ENCODE measurements at regions of chr2 and their contacts with region 1.

Region 1: DNA sequence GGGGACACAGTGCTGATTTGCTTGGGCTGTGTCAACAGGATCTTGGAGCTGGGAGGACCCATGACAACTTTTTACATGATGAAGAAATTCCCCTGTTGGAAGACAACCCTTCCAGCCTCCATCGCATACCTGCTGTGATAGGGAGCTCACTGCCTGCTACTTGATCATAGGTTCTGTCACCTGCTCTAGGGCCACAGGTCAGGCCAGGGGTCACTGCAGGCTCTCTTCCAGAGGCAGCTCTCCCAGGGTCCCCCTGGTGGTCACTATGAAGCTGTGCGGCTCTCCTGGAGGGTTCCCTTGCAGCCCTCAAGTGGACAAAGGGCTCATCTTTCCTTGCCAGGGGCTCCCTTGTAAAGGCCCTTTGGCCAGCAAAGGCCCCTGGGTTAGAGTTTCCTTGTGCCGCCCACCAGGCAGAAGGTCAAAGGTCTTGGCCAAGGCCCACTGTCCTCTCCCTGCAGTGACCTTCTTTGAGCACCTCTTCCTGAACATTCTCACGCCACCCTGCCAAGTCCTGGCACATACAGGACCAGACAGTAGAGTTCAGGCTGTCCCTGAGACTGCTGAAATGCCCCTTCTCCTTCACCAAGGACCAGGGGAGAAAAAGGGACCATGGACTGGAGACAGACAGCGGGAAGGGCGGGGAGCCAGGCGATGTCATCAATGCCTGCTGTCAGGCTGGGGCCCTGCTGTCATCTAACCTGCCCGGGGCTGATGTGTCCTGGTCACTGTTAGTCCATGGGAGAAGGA is 345.1 kb downstream of the DYSF start:
- DNase-seq: peak in 1 of 2 donors; percentile 63
- H3K4me3 ChIP-seq: no peak overlapping the region
- H3K27ac ChIP-seq: no peak overlapping the region
- H3K4me1 ChIP-seq: peaks cover 7 to 13% of the 10 kb centered on the region in 2 donors
- H3K27me3 ChIP-seq: no peaks in the 10 kb centered on the region
- CTCF ChIP-seq: peak; percentile 69 to 78 (median 72)

Region 2: DNA sequence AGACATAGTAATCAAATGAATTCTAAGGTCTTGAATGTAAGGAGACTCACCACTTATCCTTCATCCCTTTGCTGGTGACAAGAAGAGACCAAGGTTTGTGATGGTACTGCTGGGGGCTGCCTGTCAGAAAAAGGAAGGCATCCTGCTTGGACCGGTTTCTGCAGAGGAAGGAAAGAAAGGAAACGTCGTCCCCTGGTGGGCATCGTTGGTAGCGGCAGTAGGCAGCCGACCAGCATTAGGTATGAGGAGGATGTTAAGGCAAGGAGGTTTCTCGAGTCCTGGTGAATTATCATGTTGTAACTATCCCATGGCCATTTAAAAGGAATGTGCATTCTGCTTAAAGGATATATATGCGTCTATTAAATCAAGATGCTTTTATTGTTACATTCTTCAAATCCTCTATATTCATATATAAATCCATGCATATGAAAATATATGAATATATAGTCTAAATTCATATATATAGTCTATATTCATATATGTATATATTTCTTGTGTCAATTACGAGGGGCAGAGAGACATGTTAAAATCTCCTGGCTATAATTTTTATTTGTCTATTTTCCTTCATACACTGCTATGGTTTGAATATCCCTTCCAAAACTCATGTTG is 1150.5 kb before region 1 on chr2:
- intact Hi-C with region 1: no loop called
- DNase-seq: peak in 1 of 2 donors; percentile 68
- H3K4me3 ChIP-seq: no peak overlapping the region
- H3K27ac ChIP-seq: no peak overlapping the region
- H3K4me1 ChIP-seq: no peaks in the 10 kb centered on the region
- H3K27me3 ChIP-seq: no peaks in the 10 kb centered on the region
- CTCF ChIP-seq: peak; percentile 63 to 79 (median 63)

Region 3: GRCh38 chr2:71609958-71610357 is 188.5 kb before region 1 on chr2:
- intact Hi-C with region 1: loop called (anchors 1 kb)
- DNase-seq: no peak
- H3K4me3 ChIP-seq: no peak overlapping the region
- H3K27ac ChIP-seq: no peak overlapping the region
- H3K4me1 ChIP-seq: peaks cover 0 to 12% of the 10 kb centered on the region in 2 donors
- H3K27me3 ChIP-seq: no peaks in the 10 kb centered on the region
- CTCF ChIP-seq: peak in 2 of 3 experiments; percentile 32 to 53

Region 4: GRCh38 chr2:71831193-71831577 is 32.7 kb after region 1 on chr2:
- intact Hi-C with region 1: loop called (anchors 2 kb)
- DNase-seq: peak; percentile 71 to 92
- H3K4me3 ChIP-seq: no peak overlapping the region
- H3K27ac ChIP-seq: peak overlapping the region; percentile 85
- H3K4me1 ChIP-seq: peaks cover 4 to 22% of the 10 kb centered on the region in 2 donors
- H3K27me3 ChIP-seq: no peaks in the 10 kb centered on the region
- CTCF ChIP-seq: no peak

Region 5: GRCh38 chr2:71995067-71995665 is 196.7 kb after region 1 on chr2:
- intact Hi-C with region 1: loop called (anchors 2 kb)
- DNase-seq: no peak
- H3K4me3 ChIP-seq: no peak overlapping the region
- H3K27ac ChIP-seq: no peak overlapping the region
- H3K4me1 ChIP-seq: no peaks in the 10 kb centered on the region
- H3K27me3 ChIP-seq: no peaks in the 10 kb centered on the region
- CTCF ChIP-seq: peak in 2 of 3 experiments; percentile 31 to 57